B cell (primary cell): ENCODE measurements at regions of chr20 and their contacts with region 1.

Region 1: DNA sequence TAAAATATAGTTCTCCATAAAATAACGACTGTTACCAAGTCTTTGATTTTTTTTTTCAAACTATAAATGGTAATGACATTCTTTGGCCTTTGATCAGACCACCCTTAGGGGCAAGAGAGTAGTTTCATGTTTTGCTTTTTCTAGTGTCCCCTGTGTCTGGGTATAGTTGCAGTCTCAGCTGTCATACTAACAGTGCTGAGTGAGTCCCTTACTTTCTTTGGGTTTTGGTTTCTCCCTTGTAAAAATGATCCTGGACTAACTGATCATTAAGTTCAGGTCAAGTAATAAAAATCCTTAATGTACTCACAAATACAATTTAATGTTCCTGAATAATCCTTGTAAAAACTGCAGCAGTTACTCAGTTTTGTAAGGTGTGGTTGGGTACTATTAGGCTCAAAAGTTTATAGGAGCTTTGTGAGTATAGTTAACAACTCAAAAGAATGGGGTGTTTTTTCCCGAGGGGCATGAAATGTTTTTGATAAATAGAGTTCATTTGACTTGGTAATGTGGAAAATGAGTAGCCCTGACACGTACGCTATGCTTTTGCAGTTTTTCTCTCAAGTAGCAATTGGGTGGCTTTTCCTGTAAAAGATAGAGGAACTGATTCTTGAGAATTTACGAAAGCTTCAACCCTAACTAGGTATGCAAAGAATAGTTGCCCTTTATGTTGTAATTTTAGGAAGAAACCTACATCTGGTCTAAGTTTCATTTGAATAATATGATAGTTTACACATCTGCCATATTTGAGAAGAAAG is 6.2 kb downstream of the PTPN1 start:
- DNase-seq: peak; percentile 83
- ATAC-seq: peak; percentile 78
- H3K4me3 ChIP-seq: peak overlapping the region in 4 of 5 experiments; percentile 15 to 52 (median 25)
- H3K4me3 Mint-ChIP-seq: peak overlapping the region; percentile 88
- H3K27ac ChIP-seq: peak overlapping the region; percentile 94 to 95
- H3K27ac Mint-ChIP-seq: peak overlapping the region; percentile 98
- H3K4me1 ChIP-seq: peaks cover 94 to 97% of the 10 kb centered on the region in 2 donors
- H3K4me1 Mint-ChIP-seq: peaks cover 91% of the 10 kb centered on the region
- H3K27me3 ChIP-seq: no peaks in the 10 kb centered on the region
- H3K27me3 Mint-ChIP-seq: no peaks in the 10 kb centered on the region
- CTCF ChIP-seq: no peak

Region 2: DNA sequence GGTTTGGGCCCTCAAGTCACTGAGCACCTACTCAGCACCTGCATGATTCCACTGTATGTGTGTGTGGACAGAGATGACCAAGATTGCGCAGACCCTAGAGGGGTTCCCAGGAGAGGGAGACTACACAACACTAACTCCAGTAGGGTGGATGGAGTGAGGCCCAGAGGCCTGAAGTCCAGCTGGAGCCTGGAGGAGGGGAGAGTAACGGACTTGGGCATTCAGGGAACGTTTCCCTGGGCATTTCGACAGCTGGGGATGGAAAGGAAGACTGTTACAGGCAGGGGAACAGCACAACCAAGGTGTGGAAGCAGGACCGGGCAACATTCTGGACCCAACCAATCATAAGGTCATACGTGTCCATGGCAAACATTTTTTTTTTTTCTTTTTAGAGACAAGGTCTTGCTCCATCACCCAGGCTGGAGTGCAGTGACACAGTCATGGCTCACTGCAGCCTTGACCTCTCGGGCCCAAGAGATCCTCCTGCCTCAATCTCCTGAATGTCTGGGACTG is 336.8 kb before region 1 on chr20:
- CTCF ChIA-PET with region 1: no interaction called
- POLR2A ChIA-PET with region 1: no interaction called
- intact Hi-C with region 1: no loop called
- DNase-seq: no peak
- ATAC-seq: peak; percentile 25
- H3K4me3 ChIP-seq: no peak overlapping the region
- H3K4me3 Mint-ChIP-seq: no peak overlapping the region
- H3K27ac ChIP-seq: no peak overlapping the region
- H3K27ac Mint-ChIP-seq: no peak overlapping the region
- H3K4me1 ChIP-seq: no peaks in the 10 kb centered on the region
- H3K4me1 Mint-ChIP-seq: no peaks in the 10 kb centered on the region
- H3K27me3 ChIP-seq: peaks cover 0 to under 1% (median 0%) of the 10 kb centered on the region in 4 experiments
- H3K27me3 Mint-ChIP-seq: peaks cover 9% of the 10 kb centered on the region
- CTCF ChIP-seq: peak; percentile 55

Region 3: GRCh38 chr20:50478162-50479036 is 38.0 kb before region 1 on chr20:
- CTCF ChIA-PET with region 1: interaction called, 26 read pairs
- POLR2A ChIA-PET with region 1: interaction called, 5 read pairs
- intact Hi-C with region 1: loop called (anchors 1 kb)
- DNase-seq: peak; percentile 84
- ATAC-seq: peak; percentile 99
- H3K4me3 ChIP-seq: no peak overlapping the region
- H3K4me3 Mint-ChIP-seq: peak overlapping the region; percentile 44
- H3K27ac ChIP-seq: no peak overlapping the region
- H3K27ac Mint-ChIP-seq: peak overlapping the region; percentile 67
- H3K4me1 ChIP-seq: peaks cover 20 to 32% of the 10 kb centered on the region in 2 donors
- H3K4me1 Mint-ChIP-seq: peaks cover 33% of the 10 kb centered on the region
- H3K27me3 ChIP-seq: no peaks in the 10 kb centered on the region
- H3K27me3 Mint-ChIP-seq: no peaks in the 10 kb centered on the region
- CTCF ChIP-seq: peak; percentile 73

Region 4: GRCh38 chr20:50528804-50529351 is 12.5 kb after region 1 on chr20:
- CTCF ChIA-PET with region 1: interaction called, 6 read pairs
- POLR2A ChIA-PET with region 1: interaction called, 12 read pairs
- intact Hi-C with region 1: loop called (anchors 1 kb)
- DNase-seq: no peak
- ATAC-seq: peak; percentile 25
- H3K4me3 ChIP-seq: peak overlapping the region in 1 of 5 experiments; percentile 2
- H3K4me3 Mint-ChIP-seq: peak overlapping the region; percentile 83
- H3K27ac ChIP-seq: peak overlapping the region; percentile 35 to 69
- H3K27ac Mint-ChIP-seq: peak overlapping the region; percentile 87
- H3K4me1 ChIP-seq: peaks cover 81 to 91% of the 10 kb centered on the region in 2 donors
- H3K4me1 Mint-ChIP-seq: peaks cover 43% of the 10 kb centered on the region
- H3K27me3 ChIP-seq: no peaks in the 10 kb centered on the region
- H3K27me3 Mint-ChIP-seq: no peaks in the 10 kb centered on the region
- CTCF ChIP-seq: no peak

Region 5: GRCh38 chr20:50540620-50541605 is 24.6 kb after region 1 on chr20:
- CTCF ChIA-PET with region 1: interaction called, 79 read pairs
- POLR2A ChIA-PET with region 1: interaction called, 19 read pairs
- intact Hi-C with region 1: no loop called
- DNase-seq: no peak
- ATAC-seq: no peak
- H3K4me3 ChIP-seq: peak overlapping the region in 4 of 5 experiments; percentile 3 to 23 (median 11)
- H3K4me3 Mint-ChIP-seq: peak overlapping the region; percentile 87
- H3K27ac ChIP-seq: peak overlapping the region; percentile 74 to 76
- H3K27ac Mint-ChIP-seq: peak overlapping the region; percentile 97
- H3K4me1 ChIP-seq: peaks cover 73 to 89% of the 10 kb centered on the region in 2 donors
- H3K4me1 Mint-ChIP-seq: peaks cover 76% of the 10 kb centered on the region
- H3K27me3 ChIP-seq: no peaks in the 10 kb centered on the region
- H3K27me3 Mint-ChIP-seq: no peaks in the 10 kb centered on the region
- CTCF ChIP-seq: no peak

Region 6: DNA sequence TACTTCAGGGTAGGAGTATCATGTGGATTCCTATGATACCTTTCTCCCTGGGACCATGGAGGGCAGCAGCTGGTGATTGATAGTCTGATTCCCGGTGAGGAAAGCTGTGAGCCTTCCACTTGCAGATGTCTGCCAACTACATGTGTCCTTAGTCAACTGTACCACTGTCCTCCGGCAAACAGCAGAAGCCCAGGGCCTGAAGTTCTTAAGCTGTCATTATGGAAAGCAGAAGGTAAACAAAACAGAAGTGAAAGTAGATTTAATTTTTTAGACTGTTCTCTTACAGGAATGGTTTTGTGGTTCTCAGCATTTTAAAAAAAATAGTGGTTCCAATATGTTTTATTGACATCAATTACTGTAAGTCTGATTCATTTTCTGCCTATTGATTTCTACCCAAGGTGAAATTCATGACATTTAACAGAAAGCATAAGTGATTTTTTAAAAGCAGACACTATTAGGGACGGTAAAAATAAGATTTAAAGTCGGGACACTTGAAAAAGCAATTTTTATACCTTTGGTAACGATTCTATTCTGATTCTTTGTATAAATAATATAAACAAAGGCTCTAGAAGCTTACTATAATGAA is 30.5 kb after region 1 on chr20:
- CTCF ChIA-PET with region 1: interaction called, 79 read pairs
- POLR2A ChIA-PET with region 1: interaction called, 19 read pairs
- intact Hi-C with region 1: loop called (anchors 1 kb)
- DNase-seq: peak; percentile 70
- ATAC-seq: peak; percentile 78
- H3K4me3 ChIP-seq: peak overlapping the region in 4 of 5 experiments; percentile 2 to 39 (median 20)
- H3K4me3 Mint-ChIP-seq: peak overlapping the region; percentile 88
- H3K27ac ChIP-seq: peak overlapping the region; percentile 48 to 83
- H3K27ac Mint-ChIP-seq: peak overlapping the region; percentile 93
- H3K4me1 ChIP-seq: peaks cover 93 to 96% of the 10 kb centered on the region in 2 donors
- H3K4me1 Mint-ChIP-seq: peaks cover 68% of the 10 kb centered on the region
- H3K27me3 ChIP-seq: no peaks in the 10 kb centered on the region
- H3K27me3 Mint-ChIP-seq: no peaks in the 10 kb centered on the region
- CTCF ChIP-seq: no peak